Activated CD4-positive, alpha-beta memory T cell treated with anti-CD3 and anti-CD28 coated beads for 36 hours (primary cell): ENCODE measurements at regions of chr19 and their contacts with region 1.

Region 1: DNA sequence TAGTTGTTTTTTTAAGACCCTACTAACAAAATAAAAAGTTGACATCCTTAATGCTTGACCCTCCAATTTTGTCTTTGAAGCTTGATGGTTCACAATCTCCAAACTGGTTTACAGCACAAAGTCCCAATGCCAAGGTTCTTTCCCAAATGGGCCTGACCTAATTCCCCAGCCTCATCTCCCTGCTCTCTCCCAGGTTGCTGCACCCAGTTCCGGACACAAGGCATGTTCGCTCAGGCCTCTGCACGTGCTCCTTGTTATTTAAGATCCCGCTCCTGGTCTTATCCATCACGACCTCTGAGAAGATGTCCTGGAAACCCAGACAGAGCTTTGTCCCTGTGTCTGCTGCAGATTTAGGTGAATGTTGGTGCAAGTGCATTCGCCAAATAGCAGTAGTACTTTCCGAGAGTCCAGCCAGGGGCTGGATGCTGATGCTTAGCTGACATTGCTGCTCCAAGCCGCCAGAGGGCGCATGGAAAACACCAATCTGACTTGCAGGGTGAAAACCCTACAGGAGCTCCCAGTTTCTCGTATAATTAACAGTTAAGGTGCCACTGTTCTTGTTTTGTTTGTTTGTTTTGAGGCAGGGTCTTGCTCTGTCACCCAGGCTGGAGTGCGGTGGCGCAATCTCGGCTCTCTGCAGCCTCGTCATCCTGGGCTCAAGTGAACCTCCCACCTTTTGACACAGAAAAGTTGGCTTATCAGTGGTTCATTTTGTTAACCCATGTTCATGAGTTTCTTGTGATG is 18.5 kb downstream of the LYPD3 start:
- DNase-seq: peak; percentile 87
- H3K4me3 Mint-ChIP-seq: no peak overlapping the region
- H3K27ac Mint-ChIP-seq: no peak overlapping the region
- H3K4me1 Mint-ChIP-seq: peaks cover 16% of the 10 kb centered on the region
- H3K27me3 Mint-ChIP-seq: no peaks in the 10 kb centered on the region

Region 2: DNA sequence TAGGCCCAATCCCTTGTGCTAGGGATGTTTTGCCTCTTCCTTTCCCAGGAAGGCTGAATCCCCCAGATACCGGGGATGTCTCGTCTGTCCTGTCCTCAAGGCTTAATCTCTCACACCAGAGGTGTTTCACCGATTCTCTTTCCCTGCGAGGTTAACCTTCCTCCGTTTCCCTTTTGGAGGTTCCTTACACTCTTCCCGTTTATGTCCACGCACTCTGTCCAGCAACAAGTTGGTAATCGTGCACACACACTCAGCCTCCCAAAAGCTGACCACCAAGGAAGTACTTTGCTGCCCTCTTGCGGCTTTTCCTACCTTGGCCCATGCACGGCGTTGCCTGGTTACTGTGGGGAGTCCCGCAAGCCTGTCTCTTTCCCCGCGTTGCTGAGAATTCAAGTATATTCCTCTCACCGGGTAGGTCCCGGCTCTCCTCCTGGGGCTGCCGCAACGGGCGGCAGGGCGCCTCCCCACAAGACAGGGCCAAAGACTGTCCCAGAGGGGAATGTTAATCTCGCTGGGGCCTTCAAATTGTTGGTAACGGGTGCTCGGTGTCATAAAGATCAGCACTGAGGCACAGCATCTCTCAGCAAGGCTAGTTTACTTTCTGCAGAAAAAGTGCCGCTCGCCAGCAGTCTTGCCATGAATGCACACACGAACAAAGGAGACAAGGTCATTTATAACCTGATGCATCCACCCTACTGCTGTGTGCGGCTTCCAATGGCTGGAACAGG is 130.2 kb before region 1 on chr19:
- CTCF ChIA-PET with region 1: no interaction called
- POLR2A ChIA-PET with region 1: no interaction called
- intact Hi-C with region 1: no loop called
- DNase-seq: no peak
- H3K4me3 Mint-ChIP-seq: no peak overlapping the region
- H3K27ac Mint-ChIP-seq: no peak overlapping the region
- H3K4me1 Mint-ChIP-seq: no peaks in the 10 kb centered on the region
- H3K27me3 Mint-ChIP-seq: peaks cover 8% of the 10 kb centered on the region

Region 3: DNA sequence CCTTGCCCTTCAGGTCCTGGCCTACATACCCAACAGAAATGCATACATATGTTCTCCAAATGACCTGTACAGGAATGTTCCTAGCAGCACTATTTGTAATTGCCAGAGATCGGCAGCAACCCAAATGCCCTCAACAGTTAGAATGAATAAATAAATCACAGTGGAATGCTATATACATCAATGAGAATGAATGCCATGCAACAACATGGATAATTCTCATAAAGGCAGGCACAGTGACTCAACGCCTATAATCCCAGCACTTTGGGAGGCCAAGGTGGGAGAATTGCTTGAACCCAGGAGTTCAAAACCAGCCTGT is 13.6 kb before region 1 on chr19:
- CTCF ChIA-PET with region 1: interaction called, 53 read pairs
- POLR2A ChIA-PET with region 1: no interaction called
- intact Hi-C with region 1: no loop called
- DNase-seq: no peak
- H3K4me3 Mint-ChIP-seq: no peak overlapping the region
- H3K27ac Mint-ChIP-seq: no peak overlapping the region
- H3K4me1 Mint-ChIP-seq: peaks cover 37% of the 10 kb centered on the region
- H3K27me3 Mint-ChIP-seq: no peaks in the 10 kb centered on the region

Region 4: GRCh38 chr19:43503501-43504425 is 56.8 kb after region 1 on chr19:
- CTCF ChIA-PET with region 1: interaction called, 47 read pairs
- POLR2A ChIA-PET with region 1: interaction called, 7 read pairs
- intact Hi-C with region 1: loop called (anchors 1 kb)
- DNase-seq: peak; percentile 99
- H3K4me3 Mint-ChIP-seq: peak overlapping the region; percentile 94
- H3K27ac Mint-ChIP-seq: peak overlapping the region; percentile 95
- H3K4me1 Mint-ChIP-seq: peaks cover 23% of the 10 kb centered on the region
- H3K27me3 Mint-ChIP-seq: no peaks in the 10 kb centered on the region

Region 5: DNA sequence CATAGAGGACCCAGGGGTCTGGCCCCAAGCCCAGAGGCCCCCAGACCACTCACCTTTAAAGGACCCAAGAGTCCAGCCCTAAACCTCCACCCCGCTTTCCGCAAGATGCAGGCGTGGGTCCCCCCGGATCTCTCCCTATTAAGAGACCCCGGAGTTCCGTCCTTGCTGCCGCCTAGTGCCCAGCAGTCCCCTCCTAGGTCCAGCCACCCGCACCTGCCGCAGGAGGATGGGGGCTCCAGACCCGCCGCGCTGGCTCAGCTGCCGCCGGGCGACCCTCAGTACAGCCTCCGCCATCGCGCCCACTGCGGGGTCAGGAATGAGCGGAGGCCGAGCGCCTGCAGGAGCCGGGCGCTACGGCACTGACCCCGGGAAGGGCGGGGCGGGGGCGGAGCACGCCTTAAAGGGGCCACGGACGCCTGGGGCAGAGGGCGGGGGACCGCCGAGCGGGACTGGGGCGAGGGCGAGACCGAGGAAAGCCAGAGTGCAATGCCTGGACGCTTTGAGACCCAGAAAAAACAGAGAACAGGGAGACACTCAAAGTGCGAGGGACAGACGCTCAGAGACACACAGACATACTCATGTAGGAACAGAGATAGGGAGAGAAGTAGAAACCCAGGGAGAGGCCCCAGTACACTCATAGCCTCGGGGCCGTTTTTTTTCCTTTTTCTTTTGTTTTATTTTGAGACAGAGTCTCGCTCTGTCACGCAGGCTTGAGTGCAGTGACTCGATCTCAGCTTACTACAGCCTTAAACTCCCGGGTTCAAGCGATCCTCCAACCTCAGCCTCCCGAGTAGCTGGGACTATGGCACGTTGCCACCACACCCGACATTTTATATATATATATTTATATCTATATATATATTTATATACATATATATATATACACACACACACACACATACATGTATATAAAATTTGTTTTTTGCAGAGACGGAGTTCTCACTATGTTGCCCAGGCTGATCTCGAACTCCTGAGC is 80.3 kb after region 1 on chr19 and contains the start of gene ETHE1:
- CTCF ChIA-PET with region 1: interaction called, 320 read pairs
- POLR2A ChIA-PET with region 1: interaction called, 3 read pairs
- intact Hi-C with region 1: no loop called
- DNase-seq: peak; percentile 85
- H3K4me3 Mint-ChIP-seq: peak within 1 kb of the TSS; percentile 92
- H3K27ac Mint-ChIP-seq: peak within 1 kb of the TSS; percentile 98
- H3K4me1 Mint-ChIP-seq: peaks cover 24% of the 10 kb centered on the region
- H3K27me3 Mint-ChIP-seq: no peaks in the 10 kb centered on the region
- total RNA-seq, gene ETHE1: 104 to 112 TPM